ENCODE measurements at regions of chr1 and their contacts with region 1.

Region 1: GRCh38 chr1:209162651-209163050 is 420.9 kb upstream of the CAMK1G start:
- DNase-seq: no peak
- H3K4me3 ChIP-seq: no peak overlapping the region
- H3K27ac ChIP-seq: no peak overlapping the region
- H3K4me1 ChIP-seq: no peaks in the 10 kb centered on the region
- H3K27me3 ChIP-seq: no peaks in the 10 kb centered on the region
- CTCF ChIP-seq: no peak
- POLR2A ChIP-seq: no peak

Region 2: GRCh38 chr1:208681878-208682663 is 480.6 kb before region 1 on chr1:
- intact Hi-C with region 1: loop called (anchors 5 kb)
- DNase-seq: no peak
- H3K4me3 ChIP-seq: no peak overlapping the region
- H3K27ac ChIP-seq: no peak overlapping the region
- H3K4me1 ChIP-seq: no peaks in the 10 kb centered on the region
- H3K27me3 ChIP-seq: no peaks in the 10 kb centered on the region
- CTCF ChIP-seq: no peak
- POLR2A ChIP-seq: no peak

Region 3: DNA sequence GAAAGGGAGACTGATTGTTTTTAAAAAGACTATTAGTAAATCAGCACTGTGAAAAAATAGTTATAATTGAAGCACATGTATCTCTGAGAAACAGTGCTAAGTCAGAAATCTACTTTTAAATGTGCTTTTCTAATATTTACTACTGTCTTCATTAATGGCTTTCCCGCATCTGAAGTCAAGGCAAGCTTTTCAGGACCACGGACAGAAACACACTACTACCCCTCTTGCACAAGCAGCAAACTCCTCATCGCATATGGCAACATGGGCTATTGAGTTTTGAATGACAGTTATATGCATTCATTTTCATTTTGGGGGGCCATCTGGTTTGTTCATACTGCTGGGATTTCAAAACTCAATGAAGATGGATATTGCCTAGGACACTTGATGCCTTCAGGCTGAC is 12.5 kb before region 1 on chr1:
- intact Hi-C with region 1: no loop called
- DNase-seq: no peak
- H3K4me3 ChIP-seq: no peak overlapping the region
- H3K27ac ChIP-seq: no peak overlapping the region
- H3K4me1 ChIP-seq: no peaks in the 10 kb centered on the region
- H3K27me3 ChIP-seq: no peaks in the 10 kb centered on the region
- CTCF ChIP-seq: no peak
- POLR2A ChIP-seq: no peak